ENCODE measurements at regions of chr20 and their contacts with region 1.

Region 1: DNA sequence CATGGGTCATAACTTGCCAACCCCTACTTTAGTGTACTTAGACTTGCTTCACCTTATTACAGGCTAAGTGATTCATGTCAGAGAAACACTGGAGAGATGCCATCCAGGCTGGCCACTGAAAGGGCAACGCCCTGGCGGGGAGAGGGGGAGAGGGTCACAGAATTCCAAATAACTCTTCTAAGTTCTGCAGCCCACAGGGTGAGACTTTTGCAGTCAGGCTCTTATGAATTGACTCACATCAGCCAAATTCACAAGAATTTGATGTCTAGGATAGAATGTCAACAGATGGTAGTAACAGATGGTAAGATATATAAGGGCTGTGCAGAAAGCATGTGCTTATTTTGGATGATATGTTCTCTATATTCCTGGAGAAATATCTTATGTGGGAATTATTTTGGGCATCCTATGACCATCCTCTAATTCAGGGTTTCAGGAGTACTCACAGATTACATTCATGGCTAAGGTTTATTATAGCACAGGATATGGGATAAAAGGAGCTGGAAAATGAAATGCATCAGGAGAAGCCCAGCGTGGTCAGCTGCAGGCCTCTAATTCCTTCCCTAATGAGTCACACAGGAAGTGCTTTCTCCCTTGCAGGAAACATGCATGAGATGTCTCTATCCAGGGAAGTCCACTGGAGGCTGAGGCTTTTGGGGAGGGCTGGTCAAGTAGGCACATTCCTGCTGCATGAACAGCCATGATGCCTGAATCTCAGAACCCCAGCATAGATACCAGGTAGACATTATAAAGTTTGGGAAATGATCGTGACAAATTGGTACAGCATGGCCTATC is 58.7 kb upstream of the RIN2 start:
- DNase-seq: no peak
- H3K4me3 ChIP-seq: no peak overlapping the region
- H3K27ac ChIP-seq: no peak overlapping the region
- H3K27me3 ChIP-seq: no peaks in the 10 kb centered on the region
- CTCF ChIP-seq: no peak

Region 2: DNA sequence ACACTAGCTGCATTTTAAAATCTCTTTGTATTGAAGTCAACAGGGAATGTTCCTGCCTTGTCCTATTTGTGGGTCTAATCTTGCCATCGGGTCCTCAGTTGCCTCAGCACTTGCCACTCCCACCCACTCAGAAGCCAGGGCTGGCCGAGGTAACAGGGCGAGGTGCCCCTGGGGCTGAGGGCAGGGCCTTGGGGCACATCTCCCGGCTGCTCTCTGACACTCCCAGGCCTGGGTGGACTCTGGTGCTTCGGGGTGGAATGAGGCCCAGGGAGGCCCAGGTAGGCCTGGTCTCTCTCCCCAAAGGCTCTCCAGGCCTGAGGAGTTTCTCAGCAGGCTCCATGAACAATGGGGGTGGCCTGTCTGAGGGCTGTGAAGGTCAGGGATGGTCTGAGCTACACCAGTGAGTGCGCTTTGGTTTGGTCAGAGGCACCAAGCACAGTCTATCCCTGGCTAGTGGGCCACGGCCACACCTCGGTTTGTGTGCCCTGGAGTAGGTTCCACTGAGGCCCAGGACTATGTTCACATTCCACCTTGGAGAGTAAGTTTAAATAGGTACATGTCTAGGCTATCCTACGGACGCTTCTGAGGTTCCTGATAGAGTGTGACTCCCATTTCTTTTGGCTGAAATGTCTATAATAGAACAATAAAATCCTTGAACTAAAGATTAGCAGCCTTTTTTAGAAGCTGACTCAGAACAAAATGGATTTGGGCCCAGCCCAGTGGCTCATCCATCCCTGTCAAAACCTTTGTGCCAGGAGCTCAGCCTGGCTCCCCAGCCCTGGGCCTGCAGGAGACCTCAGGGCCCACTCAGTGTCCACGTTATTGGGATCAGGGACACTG is 408.2 kb before region 1 on chr20:
- intact Hi-C with region 1: no loop called
- DNase-seq: no peak
- H3K4me3 ChIP-seq: no peak overlapping the region
- H3K27ac ChIP-seq: no peak overlapping the region
- H3K27me3 ChIP-seq: no peaks in the 10 kb centered on the region
- CTCF ChIP-seq: no peak

Region 3: GRCh38 chr20:19710336-19711120 is 11.2 kb after region 1 on chr20:
- intact Hi-C with region 1: no loop called
- DNase-seq: no peak
- H3K4me3 ChIP-seq: no peak overlapping the region
- H3K27ac ChIP-seq: no peak overlapping the region
- H3K27me3 ChIP-seq: peaks cover 0 to 7% (median 0%) of the 10 kb centered on the region in 45 donors
- CTCF ChIP-seq: no peak

Region 4: DNA sequence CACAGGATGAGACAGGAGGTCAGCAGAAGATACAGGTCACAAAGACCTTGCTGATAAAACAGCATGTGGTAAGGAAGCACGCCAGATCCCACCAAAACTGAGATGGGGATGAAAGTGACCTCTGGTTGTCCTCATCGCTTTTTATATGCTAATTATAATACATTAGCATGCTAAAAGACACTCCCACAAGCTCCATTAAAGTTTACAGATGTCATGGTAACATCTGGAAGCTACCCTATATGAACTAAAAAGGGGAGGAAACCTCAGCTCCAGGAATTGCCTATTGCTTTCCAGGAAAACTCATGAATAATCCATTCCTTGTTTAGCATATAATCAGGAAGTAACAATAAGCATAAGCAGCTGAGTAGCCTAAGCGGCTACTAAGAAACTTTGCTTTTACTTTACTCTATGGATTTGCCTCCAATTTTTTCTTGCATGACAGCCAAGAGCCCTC is 50.3 kb after region 1 on chr20:
- intact Hi-C with region 1: loop called in 1 of 2 experiments (anchors 5 kb)
- DNase-seq: no peak
- H3K4me3 ChIP-seq: no peak overlapping the region
- H3K27ac ChIP-seq: no peak overlapping the region
- H3K27me3 ChIP-seq: no peaks in the 10 kb centered on the region
- CTCF ChIP-seq: no peak

Measured in dorsolateral prefrontal cortex (tissue), 120 donors.